ENCODE measurements at regions of chr6 and their contacts with region 1.

Region 1: GRCh38 chr6:17156112-17156921 is 54.5 kb downstream of the STMND1 start:
- DNase-seq: peak; percentile 72 to 90
- H3K4me3 ChIP-seq: no peak overlapping the region
- H3K27ac ChIP-seq: no peak overlapping the region
- H3K4me1 ChIP-seq: peaks cover 0 to 5% (median 0%) of the 10 kb centered on the region in 4 donors
- H3K27me3 ChIP-seq: no peaks in the 10 kb centered on the region
- CTCF ChIP-seq: peak in 5 of 7 experiments; percentile 55 to 84 (median 71)
- EP300 ChIP-seq: no peak
- POLR2A ChIP-seq: no peak

Region 2: GRCh38 chr6:17536586-17536985 is 380.3 kb after region 1 on chr6:
- intact Hi-C with region 1: no loop called
- DNase-seq: no peak
- H3K4me3 ChIP-seq: no peak overlapping the region
- H3K27ac ChIP-seq: no peak overlapping the region
- H3K4me1 ChIP-seq: no peaks in the 10 kb centered on the region
- H3K27me3 ChIP-seq: no peaks in the 10 kb centered on the region
- CTCF ChIP-seq: no peak
- EP300 ChIP-seq: no peak
- POLR2A ChIP-seq: no peak

Region 3: DNA sequence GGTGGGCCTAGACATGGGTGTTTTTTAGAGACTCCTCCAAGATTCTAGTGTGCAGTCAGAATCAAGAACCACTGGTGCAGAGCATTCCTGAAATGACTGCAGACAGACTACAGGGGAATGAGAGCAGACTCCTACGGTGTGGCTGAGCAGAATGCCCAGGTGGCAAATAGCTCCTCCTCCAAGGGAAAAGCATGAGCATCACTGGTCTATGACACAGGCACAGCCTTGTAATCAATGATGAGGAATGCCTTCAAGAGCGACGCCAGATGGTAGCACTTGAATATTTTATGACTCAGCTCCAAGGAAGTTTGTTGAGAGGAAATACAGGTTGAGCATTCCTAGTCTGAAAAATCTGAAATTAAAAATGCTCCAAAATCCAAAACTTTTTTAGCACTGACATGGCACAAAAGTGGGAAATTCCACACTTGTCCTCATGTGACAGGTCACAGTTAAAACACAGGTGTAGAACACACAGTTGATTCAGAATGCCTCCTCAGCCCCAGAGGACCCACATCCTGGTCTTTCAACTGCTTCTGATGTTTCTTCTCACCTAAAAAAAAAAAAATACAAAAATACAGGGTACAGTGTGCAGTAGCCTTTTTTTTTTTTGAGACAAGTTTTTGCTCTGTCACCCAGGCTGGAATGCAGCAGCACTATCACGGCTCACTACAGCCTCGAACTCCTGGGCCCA is 433.2 kb after region 1 on chr6:
- intact Hi-C with region 1: loop called (anchors 5 kb)
- DNase-seq: peak in 1 of 2 donors; percentile 46
- H3K4me3 ChIP-seq: no peak overlapping the region
- H3K27ac ChIP-seq: no peak overlapping the region
- H3K4me1 ChIP-seq: peaks cover 0 to 9% (median 1%) of the 10 kb centered on the region in 4 donors
- H3K27me3 ChIP-seq: no peaks in the 10 kb centered on the region
- CTCF ChIP-seq: no peak
- EP300 ChIP-seq: no peak
- POLR2A ChIP-seq: no peak

Measured in stomach (tissue), 19 donors.